CD4-positive, alpha-beta T cell (primary cell): ENCODE measurements at regions of chr19 and their contacts with region 1.

Region 1: DNA sequence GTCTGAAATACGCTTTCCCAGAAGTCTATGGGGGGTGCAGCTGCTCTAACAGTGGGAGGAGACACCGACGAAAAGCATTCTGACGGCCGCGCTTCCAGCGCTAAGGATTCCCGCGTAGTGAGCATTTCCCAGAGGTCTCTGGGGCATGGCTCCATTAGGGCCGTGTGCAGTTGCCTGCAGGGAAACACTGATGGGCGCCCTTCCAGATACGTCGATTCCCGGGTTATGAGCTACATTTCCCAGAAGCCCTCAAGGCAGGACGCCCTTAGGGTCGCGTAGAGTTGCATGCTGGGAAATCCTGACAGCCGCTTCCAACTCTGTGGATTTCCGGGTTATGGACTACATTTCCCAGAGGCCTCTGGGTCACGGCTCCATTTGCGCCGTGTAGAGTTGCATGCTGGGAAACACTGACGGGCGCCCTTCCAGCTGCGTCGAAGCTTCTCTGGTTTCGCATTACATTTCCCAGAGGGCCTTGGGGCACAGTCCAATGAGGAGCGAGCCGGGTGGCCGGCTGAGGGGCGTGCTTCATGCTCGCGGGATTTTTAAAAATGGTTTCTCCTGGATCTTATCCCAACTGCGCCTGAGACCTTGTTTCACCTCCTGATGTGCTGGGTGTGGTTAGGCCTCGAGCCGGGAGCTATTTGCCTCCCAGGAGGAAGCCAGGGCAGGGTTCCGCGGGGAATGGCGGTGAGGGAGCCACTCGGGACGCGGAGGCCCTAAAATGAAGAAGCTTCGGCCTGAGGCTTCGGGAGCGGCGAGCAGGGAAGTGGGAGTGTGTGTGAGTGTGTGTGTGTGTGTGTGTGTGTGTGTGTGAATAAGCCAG is 17.2 kb upstream of the ZNF331 start:
- DNase-seq: peak; percentile 79 to 96 (median 84)
- ATAC-seq: peak; percentile 99
- H3K4me3 ChIP-seq: peak overlapping the region; percentile 91
- H3K4me3 Mint-ChIP-seq: peak overlapping the region; percentile 92
- H3K27ac ChIP-seq: peak overlapping the region; percentile 66 to 77
- H3K27ac Mint-ChIP-seq: peak overlapping the region; percentile 92
- H3K4me1 ChIP-seq: peaks cover 18% of the 10 kb centered on the region
- H3K4me1 Mint-ChIP-seq: peaks cover 20% of the 10 kb centered on the region
- H3K27me3 ChIP-seq: no peaks in the 10 kb centered on the region
- H3K27me3 Mint-ChIP-seq: no peaks in the 10 kb centered on the region
- CTCF ChIP-seq: no peak

Region 2: GRCh38 chr19:53431399-53432087 is 89.2 kb before region 1 on chr19 and contains the start of gene ZNF761:
- CTCF ChIA-PET with region 1: no interaction called
- POLR2A ChIA-PET with region 1: no interaction called
- intact Hi-C with region 1: loop called in 1 of 2 experiments (anchors 1 kb)
- DNase-seq: peak; percentile 94 to 99 (median 98)
- ATAC-seq: peak; percentile 96
- H3K4me3 ChIP-seq: peak within 1 kb of the TSS; percentile 88
- H3K4me3 Mint-ChIP-seq: peak within 1 kb of the TSS; percentile 98
- H3K27ac ChIP-seq: peak within 1 kb of the TSS; percentile 51 to 80
- H3K27ac Mint-ChIP-seq: peak within 1 kb of the TSS; percentile 96
- H3K4me1 ChIP-seq: peaks cover 15% of the 10 kb centered on the region
- H3K4me1 Mint-ChIP-seq: peaks cover 41% of the 10 kb centered on the region
- H3K27me3 ChIP-seq: no peaks in the 10 kb centered on the region
- H3K27me3 Mint-ChIP-seq: no peaks in the 10 kb centered on the region
- CTCF ChIP-seq: no peak
- total RNA-seq, gene ZNF761: 4.5 to 5.6 TPM

Region 3: GRCh38 chr19:53467485-53468262 is 53.1 kb before region 1 on chr19 and contains the start of gene ZNF813:
- CTCF ChIA-PET with region 1: no interaction called
- POLR2A ChIA-PET with region 1: interaction called, 3 read pairs
- intact Hi-C with region 1: loop called (anchors 2 to 5 kb)
- DNase-seq: peak; percentile 93 to 99 (median 96)
- ATAC-seq: peak; percentile 97
- H3K4me3 ChIP-seq: peak within 1 kb of the TSS; percentile 74
- H3K4me3 Mint-ChIP-seq: peak within 1 kb of the TSS; percentile 96
- H3K27ac ChIP-seq: peak within 1 kb of the TSS; percentile 21 to 60
- H3K27ac Mint-ChIP-seq: peak within 1 kb of the TSS; percentile 89
- H3K4me1 ChIP-seq: peaks cover 15% of the 10 kb centered on the region
- H3K4me1 Mint-ChIP-seq: peaks cover 35% of the 10 kb centered on the region
- H3K27me3 ChIP-seq: peaks cover 0 to 5% of the 10 kb centered on the region in 2 experiments
- H3K27me3 Mint-ChIP-seq: peaks cover 12% of the 10 kb centered on the region
- CTCF ChIP-seq: no peak
- total RNA-seq, gene ZNF813: 2.0 to 2.7 TPM

Region 4: GRCh38 chr19:53537480-53538383 is 17.0 kb after region 1 on chr19 and contains the start of gene ZNF331:
- CTCF ChIA-PET with region 1: no interaction called
- POLR2A ChIA-PET with region 1: interaction called, 21 read pairs
- intact Hi-C with region 1: loop called in 1 of 2 experiments (anchors 2 kb)
- DNase-seq: peak; percentile 77 to 97 (median 88)
- ATAC-seq: peak; percentile 74
- H3K4me3 ChIP-seq: peak within 1 kb of the TSS; percentile 91
- H3K4me3 Mint-ChIP-seq: peak within 1 kb of the TSS; percentile 98
- H3K27ac ChIP-seq: peak within 1 kb of the TSS; percentile 89 to 95
- H3K27ac Mint-ChIP-seq: peak within 1 kb of the TSS; percentile 98
- H3K4me1 ChIP-seq: peaks cover 21% of the 10 kb centered on the region
- H3K4me1 Mint-ChIP-seq: peaks cover 44% of the 10 kb centered on the region
- H3K27me3 ChIP-seq: no peaks in the 10 kb centered on the region
- H3K27me3 Mint-ChIP-seq: peaks cover 9% of the 10 kb centered on the region
- CTCF ChIP-seq: no peak
- total RNA-seq, gene ZNF331: 428 to 437 TPM

Region 5: DNA sequence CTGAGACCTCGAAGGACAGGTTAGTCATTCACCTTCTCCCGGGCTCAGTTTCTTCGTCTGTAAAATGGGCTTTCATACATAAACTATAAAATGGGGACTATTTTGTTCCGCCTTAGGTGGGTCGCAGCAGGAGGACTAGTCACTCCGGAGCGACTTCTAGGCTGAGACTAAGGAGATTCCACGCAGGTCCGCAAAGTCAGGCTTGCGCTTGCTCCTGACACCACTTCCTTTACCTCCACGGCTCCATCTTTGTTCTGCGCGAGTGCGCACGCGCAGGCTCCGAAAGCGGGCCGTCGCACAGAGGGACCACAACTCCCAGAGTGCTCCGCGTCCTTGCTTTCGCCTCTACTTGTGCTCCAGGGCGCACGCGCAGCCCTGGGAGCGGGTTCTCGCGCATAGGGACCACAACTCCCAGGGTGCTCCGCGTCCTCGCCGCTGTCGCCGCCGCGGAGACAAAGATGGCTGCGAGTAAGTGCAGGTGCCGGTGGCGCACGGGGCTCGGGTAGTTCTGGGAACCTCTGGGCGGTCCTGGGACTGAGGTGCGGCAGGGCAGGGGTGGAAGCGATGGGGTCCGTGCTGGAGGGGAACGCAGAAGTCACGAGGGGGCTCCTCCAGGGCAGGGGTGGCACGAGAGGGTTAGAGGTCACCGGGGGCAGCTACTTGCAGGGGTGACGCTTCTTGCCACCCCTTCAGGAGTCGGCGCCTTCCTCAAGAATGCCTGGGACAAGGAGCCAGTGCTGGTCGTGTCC is 581.8 kb after region 1 on chr19 and contains the start of gene NDUFA3:
- CTCF ChIA-PET with region 1: no interaction called
- POLR2A ChIA-PET with region 1: no interaction called
- intact Hi-C with region 1: loop called in 1 of 2 experiments (anchors 10 kb)
- DNase-seq: peak; percentile 93 to 100 (median 98)
- ATAC-seq: peak; percentile 99
- H3K4me3 ChIP-seq: peak within 1 kb of the TSS; percentile 98
- H3K4me3 Mint-ChIP-seq: peak within 1 kb of the TSS; percentile 97
- H3K27ac ChIP-seq: peak within 1 kb of the TSS; percentile 37 to 72
- H3K27ac Mint-ChIP-seq: peak within 1 kb of the TSS; percentile 82
- H3K4me1 ChIP-seq: peaks cover 24% of the 10 kb centered on the region
- H3K4me1 Mint-ChIP-seq: peaks cover 23% of the 10 kb centered on the region
- H3K27me3 ChIP-seq: no peaks in the 10 kb centered on the region
- H3K27me3 Mint-ChIP-seq: no peaks in the 10 kb centered on the region
- CTCF ChIP-seq: no peak
- total RNA-seq, gene NDUFA3: 63.0 to 63.5 TPM